ENCODE measurements at regions of chr20 and their contacts with region 1.

Region 1: DNA sequence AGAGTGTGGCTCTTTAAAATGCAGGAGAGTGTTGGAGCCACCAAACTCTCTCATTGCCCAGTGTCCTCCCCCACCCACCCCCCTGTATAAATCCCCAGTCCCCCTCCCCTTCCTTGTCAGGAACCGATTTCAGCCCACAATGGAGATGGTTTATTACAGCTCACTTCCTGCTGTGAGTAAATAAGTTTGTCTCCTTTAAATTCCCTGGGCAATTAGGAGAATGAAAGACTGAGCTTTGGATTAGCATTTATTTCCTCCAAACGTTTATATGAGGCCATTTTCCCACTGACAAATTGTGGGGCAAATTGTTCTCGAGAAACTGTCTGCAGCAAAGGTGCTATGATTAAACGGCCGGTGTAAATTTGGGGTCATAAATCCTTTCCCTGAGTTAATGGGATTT is 128.8 kb downstream of the DHX35 start:
- DNase-seq: no peak
- ATAC-seq: no peak
- H3K4me3 ChIP-seq: no peak overlapping the region
- H3K27ac ChIP-seq: no peak overlapping the region
- H3K4me1 ChIP-seq: no peaks in the 10 kb centered on the region
- H3K27me3 ChIP-seq: no peaks in the 10 kb centered on the region
- CTCF ChIP-seq: no peak
- POLR2A ChIP-seq: no peak
- RAD21 ChIP-seq: no peak

Region 2: DNA sequence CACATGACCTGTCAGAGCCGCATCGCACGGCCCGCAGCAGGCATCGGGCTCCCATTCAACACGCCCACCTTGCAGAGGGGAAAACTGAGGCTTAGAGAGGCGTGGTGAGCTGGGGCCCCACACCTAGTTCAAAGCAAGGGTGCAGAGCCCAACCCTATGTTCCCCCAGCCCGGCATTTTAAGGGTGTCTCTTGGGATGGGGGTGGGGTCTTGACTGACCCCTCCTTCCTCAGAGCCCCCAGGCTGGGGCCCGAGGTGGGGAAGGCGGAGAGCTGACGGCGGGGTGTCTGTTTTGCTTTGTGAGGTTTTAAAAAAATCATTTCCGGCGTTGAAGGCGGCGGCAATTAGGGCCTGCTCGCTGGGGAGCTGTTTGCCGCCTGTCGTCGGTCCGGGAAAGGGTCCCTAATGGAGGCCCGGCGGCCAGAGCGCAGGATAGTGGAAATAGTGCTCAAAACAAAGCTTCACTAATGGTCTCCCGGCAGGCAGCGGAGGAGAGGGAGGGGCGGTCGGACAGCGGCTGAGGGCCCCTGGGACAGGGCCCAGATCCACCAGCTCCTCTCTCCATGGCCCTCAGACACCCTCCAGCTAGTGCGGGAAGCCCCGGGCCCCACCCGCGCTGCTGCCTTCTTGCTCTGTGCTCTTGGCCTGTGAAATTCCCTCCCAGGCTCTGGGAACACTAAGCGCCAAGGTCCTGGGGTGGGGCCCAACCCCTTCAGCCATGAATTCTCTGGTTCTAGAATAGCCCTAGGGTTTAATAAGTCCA is 1176.1 kb before region 1 on chr20:
- CTCF ChIA-PET with region 1: no interaction called
- POLR2A ChIA-PET with region 1: no interaction called
- RAD21 ChIA-PET with region 1: no interaction called
- intact Hi-C with region 1: no loop called
- DNase-seq: no peak
- ATAC-seq: no peak
- H3K4me3 ChIP-seq: no peak overlapping the region
- H3K27ac ChIP-seq: no peak overlapping the region
- H3K4me1 ChIP-seq: no peaks in the 10 kb centered on the region
- H3K27me3 ChIP-seq: peaks cover 9% of the 10 kb centered on the region; the same call in 1 of the 2 replicates
- CTCF ChIP-seq: no peak
- POLR2A ChIP-seq: no peak
- RAD21 ChIP-seq: no peak

Region 3: DNA sequence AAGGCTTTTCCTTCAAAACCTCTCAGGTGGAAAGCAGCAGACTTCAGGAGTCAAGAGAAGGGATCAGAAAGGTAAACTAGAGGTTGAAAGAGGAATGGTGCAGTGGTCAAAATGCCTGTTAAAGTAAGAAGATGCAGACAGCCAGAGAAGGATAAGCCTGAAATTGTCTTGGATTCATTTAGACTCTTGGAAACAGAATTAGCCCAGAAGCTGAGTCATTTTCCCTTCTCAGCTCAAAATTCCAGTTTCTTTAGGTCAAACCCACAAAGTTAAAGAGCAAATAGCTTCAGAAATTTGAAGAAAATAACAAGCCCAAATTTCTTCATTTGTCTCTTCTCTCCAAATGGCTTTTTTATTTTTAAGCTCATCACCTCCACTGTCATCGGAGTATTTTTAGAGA is 54.9 kb before region 1 on chr20:
- CTCF ChIA-PET with region 1: no interaction called
- POLR2A ChIA-PET with region 1: no interaction called
- RAD21 ChIA-PET with region 1: no interaction called
- intact Hi-C with region 1: loop called (anchors 10 kb)
- DNase-seq: no peak
- ATAC-seq: no peak
- H3K4me3 ChIP-seq: no peak overlapping the region
- H3K27ac ChIP-seq: no peak overlapping the region
- H3K4me1 ChIP-seq: no peaks in the 10 kb centered on the region
- H3K27me3 ChIP-seq: no peaks in the 10 kb centered on the region
- CTCF ChIP-seq: no peak
- POLR2A ChIP-seq: no peak
- RAD21 ChIP-seq: no peak

Region 4: DNA sequence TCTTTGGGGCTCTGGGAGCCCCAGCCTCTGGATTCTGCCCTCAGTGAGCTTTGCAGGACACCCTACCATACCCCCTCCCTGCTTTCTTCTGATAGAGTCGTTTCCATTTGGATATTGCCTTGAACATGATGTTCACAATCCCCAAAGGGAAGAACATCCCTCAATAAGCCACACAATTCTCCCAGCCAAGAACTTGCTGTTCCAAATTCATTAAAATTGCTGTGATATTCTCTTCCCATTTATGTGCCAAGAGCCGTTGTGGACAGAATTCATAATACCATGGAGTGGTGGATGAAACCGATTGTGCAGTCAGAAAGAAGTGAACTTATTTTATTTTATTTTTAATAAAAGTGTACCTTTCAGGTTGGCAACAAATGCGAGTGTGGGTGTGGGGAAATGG is 33.0 kb before region 1 on chr20:
- CTCF ChIA-PET with region 1: no interaction called
- POLR2A ChIA-PET with region 1: no interaction called
- RAD21 ChIA-PET with region 1: no interaction called
- intact Hi-C with region 1: no loop called
- DNase-seq: no peak
- ATAC-seq: no peak
- H3K4me3 ChIP-seq: no peak overlapping the region
- H3K27ac ChIP-seq: no peak overlapping the region
- H3K4me1 ChIP-seq: no peaks in the 10 kb centered on the region
- H3K27me3 ChIP-seq: peaks cover 6% of the 10 kb centered on the region; the same call in 1 of the 2 replicates
- CTCF ChIP-seq: no peak
- POLR2A ChIP-seq: no peak
- RAD21 ChIP-seq: no peak

Measured in HCT116 (cell line).